ENCODE measurements at regions of chr11 and their contacts with region 1.

Region 1: GRCh38 chr11:68989936-68990606 is 9.3 kb upstream of the MRGPRD start:
- DNase-seq: no peak
- ATAC-seq: no peak
- H3K4me3 ChIP-seq: no peak overlapping the region
- H3K27ac ChIP-seq: no peak overlapping the region
- H3K4me1 ChIP-seq: no peaks in the 10 kb centered on the region
- CTCF ChIP-seq: no peak
- EP300 ChIP-seq: no peak
- POLR2A ChIP-seq: no peak
- RAD21 ChIP-seq: no peak

Region 2: DNA sequence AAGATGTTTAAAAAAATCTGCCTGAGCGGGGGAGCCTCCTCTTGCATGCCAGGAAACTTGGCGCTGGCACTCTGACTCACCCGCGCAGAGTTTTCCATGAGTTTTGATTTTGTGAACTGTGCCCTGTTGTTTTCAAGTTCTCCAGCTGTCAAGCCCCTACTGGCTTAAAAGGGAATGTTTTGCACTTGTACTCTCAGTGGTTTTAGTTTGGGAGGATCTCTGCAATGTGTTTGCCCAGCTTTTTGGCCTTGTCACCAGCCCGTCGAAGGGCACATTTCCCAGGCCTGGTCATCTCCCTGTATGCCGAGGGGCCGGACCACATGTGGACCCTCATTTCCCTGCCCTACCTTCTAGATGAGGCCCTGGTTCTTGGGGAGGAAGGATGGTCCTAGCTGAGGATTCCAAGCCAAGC is 10.8 kb after region 1 on chr11:
- CTCF ChIA-PET with region 1: interaction called, 10 read pairs
- POLR2A ChIA-PET with region 1: no interaction called
- DNase-seq: peak; percentile 60 to 63
- ATAC-seq: peak; percentile 77 to 88
- H3K4me3 ChIP-seq: no peak overlapping the region
- H3K27ac ChIP-seq: no peak overlapping the region
- H3K4me1 ChIP-seq: peaks cover 10% of the 10 kb centered on the region
- CTCF ChIP-seq: no peak
- EP300 ChIP-seq: no peak
- POLR2A ChIP-seq: no peak
- RAD21 ChIP-seq: peak in 1 of 2 experiments; percentile 16; a peak in 1 of 5 replicates

Region 3: DNA sequence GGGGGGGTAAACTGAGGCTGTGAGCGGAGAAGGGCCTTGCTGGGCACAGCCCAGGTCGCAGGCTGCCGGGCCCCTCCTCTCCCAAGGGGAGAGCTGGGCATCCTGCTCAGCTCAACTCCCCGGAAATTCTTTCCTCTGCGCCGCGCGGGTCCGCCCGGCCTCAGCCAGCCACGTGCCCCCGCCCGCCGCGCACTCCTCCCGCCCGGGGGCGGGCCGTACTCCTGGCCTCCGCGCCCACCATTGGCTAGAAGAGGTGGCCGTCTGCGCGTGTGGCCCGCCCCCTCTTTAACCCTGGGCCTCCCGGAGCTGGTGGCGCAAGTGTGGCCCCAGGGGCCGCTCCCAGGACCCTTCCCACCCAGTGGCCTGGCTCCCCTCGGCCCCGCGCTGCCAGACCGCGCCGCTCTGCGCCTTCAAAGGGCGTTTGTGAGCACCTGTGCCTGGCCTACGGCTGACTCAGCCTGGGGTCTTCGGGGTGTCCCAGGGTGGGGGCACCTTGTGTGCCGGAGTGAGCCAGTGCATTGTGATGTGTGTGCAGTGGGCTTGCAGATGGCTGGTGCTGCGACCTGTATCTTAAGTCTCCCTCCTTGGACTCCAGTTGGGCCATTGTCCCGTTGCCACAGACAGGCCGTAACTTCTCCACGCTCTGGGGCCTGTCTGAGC is 21.0 kb after region 1 on chr11:
- CTCF ChIA-PET with region 1: no interaction called
- POLR2A ChIA-PET with region 1: no interaction called
- DNase-seq: peak in 1 of 2 experiments; percentile 31
- ATAC-seq: peak in 1 of 2 experiments; percentile 10; a peak in 2 of 6 replicates
- H3K4me3 ChIP-seq: no peak overlapping the region
- H3K27ac ChIP-seq: peak overlapping the region in 1 of 2 experiments; percentile 89; a peak in 3 of 6 replicates
- H3K4me1 ChIP-seq: peaks cover 39% of the 10 kb centered on the region
- CTCF ChIP-seq: no peak
- EP300 ChIP-seq: no peak
- POLR2A ChIP-seq: no peak
- RAD21 ChIP-seq: no peak

Region 4: DNA sequence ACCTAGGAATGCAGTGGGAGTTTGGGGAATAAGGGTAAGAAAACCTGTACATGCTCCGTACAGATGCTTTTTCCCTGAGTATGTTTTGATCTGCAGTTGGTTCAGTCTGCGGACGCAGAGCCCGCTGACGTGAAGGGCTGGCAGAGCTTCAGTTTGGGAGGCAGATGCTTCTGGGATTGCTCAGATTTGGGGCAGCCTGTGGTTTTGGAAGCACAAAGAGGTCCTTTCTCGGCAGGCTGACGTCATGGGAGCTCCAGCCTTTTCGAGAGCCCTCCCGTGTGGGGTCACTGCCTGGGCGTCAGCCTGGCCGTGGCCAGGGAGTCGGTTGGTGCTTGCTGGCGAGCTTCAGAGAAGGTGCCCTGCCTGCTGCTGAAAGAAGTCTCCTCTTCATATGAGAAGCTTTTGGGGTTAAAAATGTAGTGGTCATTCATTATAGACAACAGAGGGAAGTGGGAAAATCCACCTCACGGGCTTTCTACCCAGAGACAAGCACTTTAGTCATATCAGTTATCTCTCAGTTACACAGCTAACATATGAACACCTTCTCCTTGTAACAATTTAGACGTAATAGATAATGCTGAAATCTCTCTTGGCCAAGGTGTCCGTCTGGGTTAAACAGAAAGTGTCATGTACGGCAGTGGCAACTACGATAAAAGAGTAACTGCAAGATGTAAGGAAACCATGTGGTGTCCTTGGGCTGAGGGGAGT is 85.5 kb after region 1 on chr11:
- CTCF ChIA-PET with region 1: no interaction called
- POLR2A ChIA-PET with region 1: no interaction called
- DNase-seq: no peak
- ATAC-seq: no peak
- H3K4me3 ChIP-seq: no peak overlapping the region
- H3K27ac ChIP-seq: no peak overlapping the region
- H3K4me1 ChIP-seq: peaks cover 13% of the 10 kb centered on the region
- CTCF ChIP-seq: no peak
- EP300 ChIP-seq: no peak
- POLR2A ChIP-seq: no peak
- RAD21 ChIP-seq: no peak